ENCODE measurements at regions of chr4 and their contacts with region 1.

Region 1: GRCh38 chr4:84582302-84583000 is 476 bp upstream of the CDS1 start:
- DNase-seq: peak; percentile 22
- ATAC-seq: peak; percentile 80
- H3K4me3 ChIP-seq: peak overlapping the region; percentile 57
- H3K27ac ChIP-seq: no peak overlapping the region
- H3K4me1 ChIP-seq: no peaks in the 10 kb centered on the region
- H3K27me3 ChIP-seq: peaks cover 41% of the 10 kb centered on the region
- CTCF ChIP-seq: no peak
- POLR2A ChIP-seq: no peak
- RAD21 ChIP-seq: no peak

Region 2: DNA sequence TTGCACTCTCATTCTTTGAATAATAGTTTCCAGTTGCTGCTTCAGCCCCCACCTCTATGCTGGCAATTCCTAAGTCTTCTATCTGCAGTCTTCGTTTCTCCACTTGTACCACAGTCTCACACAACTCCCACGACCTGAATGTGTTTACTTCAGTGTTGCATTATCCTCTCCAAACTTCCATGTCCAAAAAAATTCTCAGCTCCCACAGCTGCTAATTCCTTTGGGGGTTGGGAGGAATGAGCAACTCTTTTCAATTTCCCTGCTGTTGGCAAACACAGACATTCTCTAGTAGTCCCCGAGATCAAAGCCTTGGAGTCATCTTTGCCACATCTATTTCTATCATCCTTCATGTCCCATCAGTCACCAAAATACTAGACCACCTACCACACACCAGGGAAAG is 14.0 kb before region 1 on chr4:
- CTCF ChIA-PET with region 1: interaction called, 10 read pairs
- POLR2A ChIA-PET with region 1: no interaction called
- dilution Hi-C with region 1: no loop called
- in situ Hi-C with region 1: no loop called
- intact Hi-C with region 1: no loop called
- DNase-seq: no peak
- ATAC-seq: no peak
- H3K4me3 ChIP-seq: no peak overlapping the region
- H3K27ac ChIP-seq: no peak overlapping the region
- H3K4me1 ChIP-seq: no peaks in the 10 kb centered on the region
- H3K27me3 ChIP-seq: no peaks in the 10 kb centered on the region
- CTCF ChIP-seq: no peak
- POLR2A ChIP-seq: no peak
- RAD21 ChIP-seq: no peak

Region 3: GRCh38 chr4:84673475-84674240 is 91.2 kb after region 1 on chr4:
- CTCF ChIA-PET with region 1: interaction called, 4 read pairs
- POLR2A ChIA-PET with region 1: no interaction called
- dilution Hi-C with region 1: no loop called
- in situ Hi-C with region 1: no loop called
- intact Hi-C with region 1: loop called (anchors 5 kb)
- DNase-seq: peak; percentile 92
- ATAC-seq: peak; percentile 85
- H3K4me3 ChIP-seq: no peak overlapping the region
- H3K27ac ChIP-seq: peak overlapping the region; percentile 55; the same call in 1 of the 2 replicates
- H3K4me1 ChIP-seq: peaks cover 10% of the 10 kb centered on the region
- H3K27me3 ChIP-seq: no peaks in the 10 kb centered on the region
- CTCF ChIP-seq: no peak
- POLR2A ChIP-seq: no peak
- RAD21 ChIP-seq: no peak

Region 4: GRCh38 chr4:84726356-84726755 is 143.9 kb after region 1 on chr4:
- CTCF ChIA-PET with region 1: no interaction called
- POLR2A ChIA-PET with region 1: no interaction called
- dilution Hi-C with region 1: no loop called
- in situ Hi-C with region 1: no loop called
- intact Hi-C with region 1: loop called (anchors 10 kb)
- DNase-seq: peak; percentile 8
- ATAC-seq: peak; percentile 60
- H3K4me3 ChIP-seq: no peak overlapping the region
- H3K27ac ChIP-seq: no peak overlapping the region
- H3K4me1 ChIP-seq: 0 out of 2 replicates have a peak, but pooled peaks cover 2% of the 10 kb centered on the region
- H3K27me3 ChIP-seq: no peaks in the 10 kb centered on the region
- CTCF ChIP-seq: no peak
- POLR2A ChIP-seq: no peak
- RAD21 ChIP-seq: no peak

Region 5: DNA sequence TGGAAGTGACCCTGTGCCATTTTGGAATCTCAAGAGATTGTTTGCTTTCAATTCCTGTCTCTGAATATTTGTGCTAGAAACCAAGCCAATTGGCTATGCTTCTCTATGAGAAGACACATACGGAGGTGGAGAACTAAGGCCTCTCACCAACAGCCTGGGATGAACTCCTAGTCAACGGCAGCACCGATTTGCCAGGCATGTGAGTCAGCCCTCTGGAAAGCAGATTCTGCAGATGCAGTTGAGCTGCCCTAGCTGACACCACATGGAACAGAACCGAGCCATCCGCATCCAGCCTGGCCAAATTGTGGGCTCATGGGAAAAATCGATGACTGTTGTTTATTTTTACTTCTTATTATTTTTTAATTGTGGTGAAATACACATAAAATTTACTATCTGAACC is 442.2 kb after region 1 on chr4:
- CTCF ChIA-PET with region 1: no interaction called
- POLR2A ChIA-PET with region 1: no interaction called
- dilution Hi-C with region 1: no loop called
- in situ Hi-C with region 1: no loop called
- intact Hi-C with region 1: no loop called
- DNase-seq: no peak
- ATAC-seq: no peak
- H3K4me3 ChIP-seq: no peak overlapping the region
- H3K27ac ChIP-seq: no peak overlapping the region
- H3K4me1 ChIP-seq: no peaks in the 10 kb centered on the region
- H3K27me3 ChIP-seq: no peaks in the 10 kb centered on the region
- CTCF ChIP-seq: no peak
- POLR2A ChIP-seq: no peak
- RAD21 ChIP-seq: no peak